ENCODE measurements at regions of chr10 and their contacts with region 1.

Region 1: GRCh38 chr10:12782537-12782936 is 219.0 kb downstream of the CCDC3 start:
- DNase-seq: peak; percentile 58
- H3K4me3 ChIP-seq: no peak overlapping the region
- H3K27ac ChIP-seq: no peak overlapping the region
- H3K4me1 ChIP-seq: peaks cover 3% of the 10 kb centered on the region
- H3K27me3 ChIP-seq: peaks cover 0 to 2% of the 10 kb centered on the region in 2 experiments
- CTCF ChIP-seq: peak; percentile 82 to 88
- POLR2A ChIP-seq: no peak

Region 2: GRCh38 chr10:12264204-12264940 is 518.2 kb before region 1 on chr10:
- CTCF ChIA-PET with region 1: interaction called, 12 read pairs
- POLR2A ChIA-PET with region 1: no interaction called
- dilution Hi-C with region 1: no loop called
- intact Hi-C with region 1: no loop called
- DNase-seq: peak; percentile 73
- H3K4me3 ChIP-seq: peak overlapping the region in 2 of 3 experiments; percentile 13 to 29
- H3K27ac ChIP-seq: no peak overlapping the region
- H3K4me1 ChIP-seq: no peaks in the 10 kb centered on the region
- H3K27me3 ChIP-seq: no peaks in the 10 kb centered on the region
- CTCF ChIP-seq: peak; percentile 70 to 82
- POLR2A ChIP-seq: no peak

Region 3: DNA sequence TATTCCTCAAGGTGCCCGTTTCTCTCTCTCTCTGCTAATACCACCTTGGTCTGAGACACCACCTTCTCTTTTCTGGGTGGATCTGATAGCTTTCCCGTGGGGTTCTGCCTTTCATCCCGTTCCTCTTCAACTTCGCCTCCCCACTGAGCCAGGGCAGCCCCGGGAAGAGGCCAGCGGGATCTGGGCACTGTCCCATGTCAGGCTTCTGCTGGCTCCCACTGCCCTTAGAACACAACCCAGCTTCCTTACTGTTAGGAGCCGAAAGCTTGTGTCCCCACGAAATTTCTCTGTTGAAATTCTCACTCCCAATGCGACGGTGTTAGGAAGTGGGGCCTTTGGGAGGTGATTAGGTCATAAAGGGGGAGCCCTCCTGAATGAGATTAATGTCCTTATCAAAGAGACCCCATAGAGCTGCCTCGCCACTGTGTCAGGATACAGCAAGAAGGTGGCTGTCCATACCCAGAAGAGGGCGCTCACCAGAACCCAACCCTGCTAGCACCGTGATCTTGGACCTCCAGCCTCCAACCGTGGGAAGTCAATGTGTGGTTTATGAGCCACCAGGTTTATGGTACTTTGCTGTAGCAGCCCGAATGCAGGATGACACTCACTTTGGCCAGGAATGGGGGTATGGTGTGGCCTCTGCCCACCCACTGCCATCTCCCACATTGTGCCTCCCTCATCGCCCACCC is 353.9 kb before region 1 on chr10:
- CTCF ChIA-PET with region 1: no interaction called
- POLR2A ChIA-PET with region 1: no interaction called
- dilution Hi-C with region 1: no loop called
- intact Hi-C with region 1: no loop called
- DNase-seq: no peak
- H3K4me3 ChIP-seq: no peak overlapping the region
- H3K27ac ChIP-seq: no peak overlapping the region
- H3K4me1 ChIP-seq: no peaks in the 10 kb centered on the region
- H3K27me3 ChIP-seq: no peaks in the 10 kb centered on the region
- CTCF ChIP-seq: no peak
- POLR2A ChIP-seq: no peak

Region 4: GRCh38 chr10:12844811-12845533 is 62.4 kb after region 1 on chr10:
- CTCF ChIA-PET with region 1: interaction called, 22 read pairs
- POLR2A ChIA-PET with region 1: no interaction called
- dilution Hi-C with region 1: no loop called
- intact Hi-C with region 1: loop called (anchors 1 kb)
- DNase-seq: peak; percentile 98
- H3K4me3 ChIP-seq: peak overlapping the region in 1 of 3 experiments; percentile 12
- H3K27ac ChIP-seq: peak overlapping the region; percentile 96
- H3K4me1 ChIP-seq: peaks cover 31% of the 10 kb centered on the region
- H3K27me3 ChIP-seq: no peaks in the 10 kb centered on the region
- CTCF ChIP-seq: no peak
- POLR2A ChIP-seq: peak; percentile 56

Region 5: DNA sequence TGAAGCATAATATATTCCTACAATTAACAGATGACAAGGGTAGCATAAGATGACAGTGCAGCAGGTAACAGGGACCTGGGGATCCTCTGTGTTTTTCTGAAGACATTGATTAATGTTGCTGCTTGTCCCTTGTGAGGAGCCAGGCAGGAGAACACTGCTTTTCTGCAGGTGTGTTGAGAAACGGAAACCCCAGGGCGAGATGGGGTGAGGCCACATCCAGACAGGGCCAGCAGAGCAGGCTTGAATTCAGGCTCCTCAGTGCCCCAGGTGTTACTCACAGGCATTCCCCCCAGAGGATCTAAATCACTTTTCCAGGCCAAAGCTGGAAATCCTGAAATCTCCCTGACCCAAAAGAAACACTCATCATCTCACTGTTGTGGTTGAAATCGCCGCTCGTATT is 113.7 kb after region 1 on chr10:
- CTCF ChIA-PET with region 1: interaction called, 237 read pairs
- POLR2A ChIA-PET with region 1: no interaction called
- dilution Hi-C with region 1: no loop called
- intact Hi-C with region 1: no loop called
- DNase-seq: no peak
- H3K4me3 ChIP-seq: no peak overlapping the region
- H3K27ac ChIP-seq: no peak overlapping the region
- H3K4me1 ChIP-seq: no peaks in the 10 kb centered on the region
- H3K27me3 ChIP-seq: peaks cover 3 to 6% of the 10 kb centered on the region in 2 experiments
- CTCF ChIP-seq: no peak
- POLR2A ChIP-seq: no peak

Region 6: GRCh38 chr10:12907656-12908055 is 125.1 kb after region 1 on chr10:
- CTCF ChIA-PET with region 1: interaction called, 237 read pairs
- POLR2A ChIA-PET with region 1: no interaction called
- dilution Hi-C with region 1: no loop called
- intact Hi-C with region 1: loop called (anchors 1 kb)
- DNase-seq: peak; percentile 13
- H3K4me3 ChIP-seq: no peak overlapping the region
- H3K27ac ChIP-seq: no peak overlapping the region
- H3K4me1 ChIP-seq: peaks cover 5% of the 10 kb centered on the region
- H3K27me3 ChIP-seq: peaks cover 0 to 2% of the 10 kb centered on the region in 2 experiments
- CTCF ChIP-seq: no peak
- POLR2A ChIP-seq: no peak

Region 7: GRCh38 chr10:13056456-13057077 is 274.0 kb after region 1 on chr10:
- CTCF ChIA-PET with region 1: interaction called, 8 read pairs
- POLR2A ChIA-PET with region 1: no interaction called
- dilution Hi-C with region 1: no loop called
- intact Hi-C with region 1: loop called (anchors 2 kb)
- DNase-seq: peak; percentile 22
- H3K4me3 ChIP-seq: no peak overlapping the region
- H3K27ac ChIP-seq: no peak overlapping the region
- H3K4me1 ChIP-seq: no peaks in the 10 kb centered on the region
- H3K27me3 ChIP-seq: no peaks in the 10 kb centered on the region
- CTCF ChIP-seq: peak; percentile 15 to 38
- POLR2A ChIP-seq: no peak

Region 8: GRCh38 chr10:13074561-13075451 is 292.3 kb after region 1 on chr10:
- CTCF ChIA-PET with region 1: interaction called, 26 read pairs
- POLR2A ChIA-PET with region 1: no interaction called
- dilution Hi-C with region 1: no loop called
- intact Hi-C with region 1: loop called (anchors 1 kb)
- DNase-seq: peak; percentile 61
- H3K4me3 ChIP-seq: no peak overlapping the region
- H3K27ac ChIP-seq: no peak overlapping the region
- H3K4me1 ChIP-seq: no peaks in the 10 kb centered on the region
- H3K27me3 ChIP-seq: peaks cover 5 to 7% of the 10 kb centered on the region in 2 experiments
- CTCF ChIP-seq: peak; percentile 83
- POLR2A ChIP-seq: no peak

Region 9: GRCh38 chr10:14276210-14276609 is 1493.7 kb after region 1 on chr10:
- CTCF ChIA-PET with region 1: no interaction called
- POLR2A ChIA-PET with region 1: no interaction called
- dilution Hi-C with region 1: no loop called
- intact Hi-C with region 1: no loop called
- DNase-seq: no peak
- H3K4me3 ChIP-seq: no peak overlapping the region
- H3K27ac ChIP-seq: no peak overlapping the region
- H3K4me1 ChIP-seq: no peaks in the 10 kb centered on the region
- H3K27me3 ChIP-seq: peaks cover 0 to 4% of the 10 kb centered on the region in 2 experiments
- CTCF ChIP-seq: no peak
- POLR2A ChIP-seq: no peak